MCF 10A (cell line): ENCODE measurements at regions of chr14 and their contacts with region 1.

Region 1: GRCh38 chr14:74566174-74567125 is 45.6 kb downstream of the LTBP2 start:
- DNase-seq: peak; percentile 96
- H3K4me3 Mint-ChIP-seq: peak overlapping the region; percentile 56
- H3K27ac Mint-ChIP-seq: peak overlapping the region; percentile 92
- H3K4me1 Mint-ChIP-seq: peaks cover 69% of the 10 kb centered on the region
- H3K27me3 Mint-ChIP-seq: no peaks in the 10 kb centered on the region
- CTCF ChIP-seq: no peak

Region 2: GRCh38 chr14:74459289-74459946 is 107.0 kb before region 1 on chr14:
- CTCF ChIA-PET with region 1: no interaction called
- POLR2A ChIA-PET with region 1: no interaction called
- intact Hi-C with region 1: no loop called
- DNase-seq: peak; percentile 58
- H3K4me3 Mint-ChIP-seq: no peak overlapping the region
- H3K27ac Mint-ChIP-seq: no peak overlapping the region
- H3K4me1 Mint-ChIP-seq: no peaks in the 10 kb centered on the region
- H3K27me3 Mint-ChIP-seq: peaks cover 14% of the 10 kb centered on the region
- CTCF ChIP-seq: peak; percentile 38

Region 3: DNA sequence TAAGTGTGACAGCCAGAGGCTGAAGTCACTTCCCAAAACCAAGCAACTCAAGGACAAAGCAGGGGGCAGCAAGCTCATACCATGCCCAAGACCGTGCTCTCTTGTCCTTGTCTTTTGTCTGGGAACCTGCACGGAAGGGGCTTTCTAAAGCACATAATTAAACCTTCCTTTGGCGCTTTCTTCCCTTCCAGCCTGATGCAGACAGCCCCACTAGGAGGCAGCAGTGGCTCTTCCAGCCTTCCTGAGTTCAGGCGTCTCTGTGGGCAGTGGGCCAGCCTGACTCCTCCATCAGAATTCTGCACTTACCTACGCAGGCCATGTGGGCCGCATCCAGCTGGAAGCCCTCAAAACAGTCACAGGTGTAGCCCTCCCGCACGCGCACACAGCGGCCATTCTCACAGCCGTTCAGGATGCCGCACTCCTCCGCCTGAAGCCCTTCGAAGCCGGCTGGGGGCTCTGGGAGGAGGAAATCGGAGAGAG is 65.3 kb before region 1 on chr14:
- CTCF ChIA-PET with region 1: interaction called, 11 read pairs
- POLR2A ChIA-PET with region 1: interaction called, 162 read pairs
- intact Hi-C with region 1: no loop called
- DNase-seq: peak; percentile 63
- H3K4me3 Mint-ChIP-seq: no peak overlapping the region
- H3K27ac Mint-ChIP-seq: no peak overlapping the region
- H3K4me1 Mint-ChIP-seq: peaks cover 14% of the 10 kb centered on the region
- H3K27me3 Mint-ChIP-seq: no peaks in the 10 kb centered on the region
- CTCF ChIP-seq: peak; percentile 53

Region 4: DNA sequence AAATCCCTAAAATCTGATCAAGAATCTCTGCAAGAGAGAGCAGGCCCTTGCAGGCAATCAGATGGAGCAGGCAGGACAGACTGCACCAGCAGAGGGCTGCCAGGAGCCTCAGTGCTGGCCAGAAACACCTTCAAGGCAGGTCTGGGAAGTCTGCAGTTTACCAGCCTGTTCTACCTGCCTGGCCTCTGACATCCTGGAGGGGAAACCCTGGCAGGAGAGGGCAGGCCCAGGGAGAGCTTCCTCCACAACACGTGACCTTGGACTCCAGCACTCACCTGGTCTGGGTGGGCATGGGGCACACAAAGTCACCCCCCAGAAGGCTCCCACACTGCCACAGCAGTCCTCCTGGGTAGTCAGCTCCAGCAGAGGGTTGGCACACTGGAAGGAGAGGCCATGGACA is 16.9 kb before region 1 on chr14:
- CTCF ChIA-PET with region 1: interaction called, 22 read pairs
- POLR2A ChIA-PET with region 1: interaction called, 17 read pairs
- intact Hi-C with region 1: no loop called
- DNase-seq: peak; percentile 51
- H3K4me3 Mint-ChIP-seq: no peak overlapping the region
- H3K27ac Mint-ChIP-seq: peak overlapping the region; percentile 91
- H3K4me1 Mint-ChIP-seq: peaks cover 21% of the 10 kb centered on the region
- H3K27me3 Mint-ChIP-seq: no peaks in the 10 kb centered on the region
- CTCF ChIP-seq: peak; percentile 47

Region 5: DNA sequence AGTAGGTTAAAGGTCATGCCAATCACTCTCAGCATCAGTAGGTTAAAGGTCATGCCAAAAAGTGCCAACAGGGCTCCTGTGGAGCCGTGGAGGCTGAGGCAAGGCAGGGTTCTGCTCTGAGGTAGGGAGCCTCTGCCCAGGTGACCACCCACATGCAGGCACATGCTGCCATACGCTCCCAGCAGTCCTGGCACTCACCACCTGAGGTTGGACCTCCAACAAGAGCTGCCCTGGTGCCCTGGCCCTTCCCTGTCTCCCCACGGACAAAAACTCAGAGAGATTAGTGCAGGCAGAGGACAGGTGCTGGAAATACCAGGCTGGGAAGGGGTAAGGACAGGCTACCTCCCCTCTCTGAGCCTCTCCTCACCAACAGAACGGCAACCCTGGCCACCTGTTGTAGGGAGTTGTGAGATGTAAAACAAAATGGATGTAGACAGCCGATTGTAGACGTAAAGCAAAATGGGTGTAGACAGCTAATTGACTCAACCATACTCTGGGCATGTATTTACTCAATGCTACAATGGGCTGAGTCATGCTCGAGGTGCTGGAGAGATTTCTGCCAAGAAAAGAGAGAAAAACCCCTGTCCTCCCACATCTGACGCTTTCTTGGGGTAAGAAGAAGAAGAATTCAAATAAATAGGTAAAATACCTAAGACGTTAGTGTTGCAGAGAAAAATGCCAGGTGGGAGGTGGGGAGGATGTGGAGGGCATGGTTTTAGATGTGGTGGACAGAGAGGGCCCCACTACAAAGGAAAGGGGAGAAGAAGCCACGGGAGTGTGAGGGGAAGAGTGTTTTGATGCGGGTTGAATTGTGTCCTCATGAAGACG is 13.2 kb after region 1 on chr14:
- CTCF ChIA-PET with region 1: interaction called, 13 read pairs
- POLR2A ChIA-PET with region 1: interaction called, 56 read pairs
- intact Hi-C with region 1: no loop called
- DNase-seq: peak; percentile 89
- H3K4me3 Mint-ChIP-seq: peak overlapping the region; percentile 19
- H3K27ac Mint-ChIP-seq: peak overlapping the region; percentile 88
- H3K4me1 Mint-ChIP-seq: peaks cover 50% of the 10 kb centered on the region
- H3K27me3 Mint-ChIP-seq: no peaks in the 10 kb centered on the region
- CTCF ChIP-seq: no peak